ENCODE measurements at regions of chr1 and their contacts with region 1.

Region 1: DNA sequence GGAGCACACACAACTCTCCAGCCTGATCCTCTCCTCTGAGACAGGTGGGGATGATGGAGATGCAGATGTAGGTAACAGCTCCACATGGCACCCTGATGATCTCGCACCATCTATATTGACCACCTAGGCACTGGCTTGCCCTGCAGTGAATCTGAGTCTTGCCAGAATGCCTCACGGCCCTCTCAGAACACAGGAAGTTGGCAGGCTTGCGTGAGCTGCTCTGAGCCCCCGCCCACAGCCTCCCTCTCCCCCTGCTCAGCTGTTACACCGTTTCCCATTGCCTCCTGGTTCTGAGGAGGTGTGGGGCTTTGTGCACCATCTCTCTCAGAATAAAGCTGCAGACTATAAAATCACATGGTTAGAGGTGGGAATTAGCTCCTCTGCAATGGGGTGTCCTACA is 48.0 kb downstream of the URB2 start:
- DNase-seq: no peak
- H3K4me3 ChIP-seq: no peak overlapping the region
- H3K27ac ChIP-seq: no peak overlapping the region
- H3K4me1 ChIP-seq: no peaks in the 10 kb centered on the region
- H3K27me3 ChIP-seq: no peaks in the 10 kb centered on the region
- CTCF ChIP-seq: no peak
- EP300 ChIP-seq: no peak
- POLR2A ChIP-seq: no peak
- RAD21 ChIP-seq: no peak

Region 2: DNA sequence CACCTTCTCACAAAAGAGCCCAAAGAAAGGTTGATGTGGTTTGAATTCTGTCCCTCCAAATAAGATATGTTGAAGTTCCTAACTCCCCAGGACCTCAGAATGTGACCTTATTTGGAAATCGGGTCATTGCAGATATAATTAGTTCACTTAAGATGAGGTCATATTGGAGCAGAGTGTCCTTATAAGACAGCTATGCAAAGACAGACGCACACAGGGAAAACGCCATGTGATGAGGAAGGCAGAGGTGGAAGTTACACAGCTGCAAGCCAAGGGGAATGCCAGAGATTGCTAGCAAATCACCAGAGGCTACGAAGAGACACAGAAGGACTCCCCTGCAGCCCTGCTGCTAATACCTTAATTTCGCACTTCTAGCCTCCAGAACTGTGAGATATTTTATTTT is 110.3 kb before region 1 on chr1:
- CTCF ChIA-PET with region 1: no interaction called
- POLR2A ChIA-PET with region 1: no interaction called
- DNase-seq: no peak
- H3K4me3 ChIP-seq: no peak overlapping the region
- H3K27ac ChIP-seq: no peak overlapping the region
- H3K4me1 ChIP-seq: peaks cover 0 to 6% (median 1%) of the 10 kb centered on the region in 4 experiments; a peak in 3 of 7 replicates
- H3K27me3 ChIP-seq: no peaks in the 10 kb centered on the region
- CTCF ChIP-seq: no peak
- EP300 ChIP-seq: no peak
- POLR2A ChIP-seq: no peak
- RAD21 ChIP-seq: no peak

Region 3: DNA sequence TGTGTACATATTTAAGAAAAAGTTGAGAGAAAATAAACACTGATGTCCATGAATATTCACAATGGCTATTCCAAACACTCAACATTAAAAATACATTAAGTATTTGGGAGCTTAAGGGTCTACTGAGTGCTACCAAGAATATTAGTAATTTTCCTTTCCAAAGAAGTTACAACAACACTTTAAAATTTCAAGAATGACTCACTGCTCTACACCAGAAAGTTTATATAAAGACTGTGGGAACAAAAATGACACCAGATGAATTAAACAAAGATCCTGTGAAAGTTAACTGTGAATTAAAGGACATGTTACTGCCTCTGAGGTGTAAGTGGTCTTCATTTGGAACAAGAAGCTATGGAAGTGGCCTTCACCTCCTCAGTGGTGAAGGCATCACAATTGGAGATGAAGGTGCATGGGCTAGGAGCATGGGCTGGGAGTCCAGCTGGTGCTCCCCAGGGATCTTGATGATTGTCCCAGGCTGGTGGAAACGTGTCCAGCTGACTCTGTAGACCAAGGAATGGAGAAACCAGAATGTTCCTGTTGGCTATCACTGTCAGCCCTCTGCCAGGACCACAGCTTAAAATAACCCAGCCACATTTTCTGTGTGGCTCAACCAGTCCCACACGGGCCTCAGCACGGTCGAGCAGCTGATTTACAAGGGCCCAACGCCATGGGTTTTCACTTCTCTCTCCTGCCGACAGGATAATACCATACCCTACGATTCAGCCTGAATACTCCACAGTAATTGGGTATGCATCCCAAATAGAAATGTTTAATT is 76.9 kb before region 1 on chr1:
- CTCF ChIA-PET with region 1: no interaction called
- POLR2A ChIA-PET with region 1: no interaction called
- DNase-seq: no peak
- H3K4me3 ChIP-seq: no peak overlapping the region
- H3K27ac ChIP-seq: no peak overlapping the region
- H3K4me1 ChIP-seq: peaks cover 0 to 3% (median 2%) of the 10 kb centered on the region in 4 experiments; a peak in 1 of 7 replicates
- H3K27me3 ChIP-seq: no peaks in the 10 kb centered on the region
- CTCF ChIP-seq: no peak
- EP300 ChIP-seq: no peak
- POLR2A ChIP-seq: no peak
- RAD21 ChIP-seq: no peak

Region 4: GRCh38 chr1:229650045-229650444 is 24.0 kb before region 1 on chr1:
- CTCF ChIA-PET with region 1: no interaction called
- POLR2A ChIA-PET with region 1: no interaction called
- DNase-seq: no peak
- H3K4me3 ChIP-seq: no peak overlapping the region
- H3K27ac ChIP-seq: no peak overlapping the region
- H3K4me1 ChIP-seq: no peaks in the 10 kb centered on the region
- H3K27me3 ChIP-seq: no peaks in the 10 kb centered on the region
- CTCF ChIP-seq: no peak
- EP300 ChIP-seq: no peak
- POLR2A ChIP-seq: no peak
- RAD21 ChIP-seq: no peak

Region 5: DNA sequence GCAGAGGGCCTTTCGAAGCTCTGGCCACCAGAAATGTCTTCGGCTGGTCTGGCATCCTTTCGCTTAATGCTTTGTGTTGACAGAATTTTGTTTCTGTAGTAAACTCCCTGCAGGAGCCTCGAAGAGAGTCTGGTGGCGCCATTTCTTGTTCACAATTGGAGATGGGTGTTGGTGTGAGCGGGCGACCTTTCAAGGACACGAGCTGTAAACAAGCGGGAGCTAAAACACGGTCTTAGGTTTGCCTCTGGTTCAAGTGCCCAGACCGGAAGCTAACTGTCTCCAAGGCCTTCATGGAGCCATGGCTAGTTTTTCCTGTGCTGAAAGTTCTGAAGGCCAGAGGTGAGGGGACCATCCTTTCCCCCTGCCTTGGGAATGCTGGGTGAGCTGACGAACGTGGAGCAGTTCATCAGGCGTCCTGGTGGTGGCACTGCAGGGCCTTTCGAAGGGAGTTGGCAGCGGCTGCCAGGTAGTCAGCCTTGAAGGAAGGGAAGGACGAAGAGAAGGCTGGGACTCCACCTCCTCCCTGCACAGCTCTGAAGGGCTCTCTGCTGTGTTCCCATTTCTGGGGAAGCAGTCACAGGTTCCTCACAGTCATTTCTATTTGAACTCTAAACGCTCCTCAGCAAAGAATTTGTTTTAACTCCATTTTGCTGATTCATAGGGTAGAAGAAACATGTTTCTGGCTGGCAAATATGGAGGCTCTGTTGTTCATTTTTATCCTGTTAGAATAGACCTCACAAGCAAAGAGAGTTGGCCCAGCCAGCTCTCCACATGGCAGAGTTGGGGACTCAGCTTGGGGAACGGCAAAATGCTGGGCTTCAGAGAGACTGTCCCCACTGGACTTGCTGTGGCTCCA is 12.8 kb before region 1 on chr1:
- CTCF ChIA-PET with region 1: interaction called, 10 read pairs
- POLR2A ChIA-PET with region 1: no interaction called
- DNase-seq: peak; percentile 65 to 96
- H3K4me3 ChIP-seq: no peak overlapping the region
- H3K27ac ChIP-seq: peak overlapping the region; percentile 31; the same call in 1 of the 2 replicates
- H3K4me1 ChIP-seq: peaks cover 0 to 4% (median 0%) of the 10 kb centered on the region in 4 experiments; a peak in 2 of 7 replicates
- H3K27me3 ChIP-seq: no peaks in the 10 kb centered on the region
- CTCF ChIP-seq: peak; percentile 92 to 100 (median 95)
- EP300 ChIP-seq: no peak
- POLR2A ChIP-seq: no peak
- RAD21 ChIP-seq: peak; percentile 96 to 98

Measured in H1 (cell line).